Right lobe of liver (tissue), 6 donors: ENCODE measurements at regions of chr13 and their contacts with region 1.

Region 1: GRCh38 chr13:30792285-30793000 is 57.1 kb downstream of the ALOX5AP start:
- DNase-seq: peak; percentile 76 to 90 (median 83)
- ATAC-seq: peak; percentile 92 to 99 (median 94)
- H3K4me3 ChIP-seq: no peak overlapping the region
- H3K27ac ChIP-seq: no peak overlapping the region
- H3K4me1 ChIP-seq: peaks cover 0 to 19% (median under 1%) of the 10 kb centered on the region in 4 donors
- H3K27me3 ChIP-seq: no peaks in the 10 kb centered on the region
- CTCF ChIP-seq: peak in 3 of 4 donors; percentile 7 to 37 (median 31)
- POLR2A ChIP-seq: no peak

Region 2: GRCh38 chr13:30142486-30143211 is 649.8 kb before region 1 on chr13:
- intact Hi-C with region 1: loop called in 1 of 2 experiments (anchors 10 kb)
- DNase-seq: peak in 1 of 3 donors; percentile 48
- ATAC-seq: peak in 2 of 4 donors; percentile 43 to 86
- H3K4me3 ChIP-seq: no peak overlapping the region
- H3K27ac ChIP-seq: no peak overlapping the region
- H3K4me1 ChIP-seq: no peaks in the 10 kb centered on the region
- H3K27me3 ChIP-seq: no peaks in the 10 kb centered on the region
- CTCF ChIP-seq: no peak
- POLR2A ChIP-seq: no peak

Region 3: GRCh38 chr13:30880856-30881155 is 88.4 kb after region 1 on chr13:
- intact Hi-C with region 1: no loop called
- DNase-seq: no peak
- ATAC-seq: peak in 1 of 4 donors; percentile 64
- H3K4me3 ChIP-seq: no peak overlapping the region
- H3K27ac ChIP-seq: no peak overlapping the region
- H3K4me1 ChIP-seq: no peaks in the 10 kb centered on the region
- H3K27me3 ChIP-seq: no peaks in the 10 kb centered on the region
- CTCF ChIP-seq: no peak
- POLR2A ChIP-seq: no peak